Head of caudate nucleus (tissue), 42 donors: ENCODE measurements at regions of chr10 and their contacts with region 1.

Region 1: GRCh38 chr10:13787015-13787421 is 200.3 kb downstream of the PRPF18 start:
- DNase-seq: peak in 41 of 42 donors; percentile 27 to 85 (median 62)

Region 2: DNA sequence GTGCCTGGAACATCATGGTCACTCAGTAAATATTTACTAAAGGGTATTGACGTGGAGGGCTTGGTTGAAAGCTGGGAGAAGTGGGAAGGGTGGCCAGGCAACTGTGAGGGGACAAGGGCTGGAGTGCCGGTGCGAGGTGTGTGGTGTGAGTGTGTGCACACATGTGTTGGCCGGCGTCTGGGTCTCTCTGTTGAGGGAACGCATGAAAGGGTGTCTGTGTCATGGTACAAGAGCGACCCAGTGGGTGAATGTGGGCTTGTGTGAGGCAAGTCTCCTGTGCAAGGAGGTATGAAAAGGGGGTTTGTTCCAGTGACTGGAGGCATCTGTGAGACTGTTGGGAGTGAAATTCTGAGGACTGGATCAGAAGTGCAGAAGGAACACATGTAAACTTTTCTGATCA is 523.4 kb before region 1 on chr10:
- intact Hi-C with region 1: no loop called
- DNase-seq: no peak

Region 3: DNA sequence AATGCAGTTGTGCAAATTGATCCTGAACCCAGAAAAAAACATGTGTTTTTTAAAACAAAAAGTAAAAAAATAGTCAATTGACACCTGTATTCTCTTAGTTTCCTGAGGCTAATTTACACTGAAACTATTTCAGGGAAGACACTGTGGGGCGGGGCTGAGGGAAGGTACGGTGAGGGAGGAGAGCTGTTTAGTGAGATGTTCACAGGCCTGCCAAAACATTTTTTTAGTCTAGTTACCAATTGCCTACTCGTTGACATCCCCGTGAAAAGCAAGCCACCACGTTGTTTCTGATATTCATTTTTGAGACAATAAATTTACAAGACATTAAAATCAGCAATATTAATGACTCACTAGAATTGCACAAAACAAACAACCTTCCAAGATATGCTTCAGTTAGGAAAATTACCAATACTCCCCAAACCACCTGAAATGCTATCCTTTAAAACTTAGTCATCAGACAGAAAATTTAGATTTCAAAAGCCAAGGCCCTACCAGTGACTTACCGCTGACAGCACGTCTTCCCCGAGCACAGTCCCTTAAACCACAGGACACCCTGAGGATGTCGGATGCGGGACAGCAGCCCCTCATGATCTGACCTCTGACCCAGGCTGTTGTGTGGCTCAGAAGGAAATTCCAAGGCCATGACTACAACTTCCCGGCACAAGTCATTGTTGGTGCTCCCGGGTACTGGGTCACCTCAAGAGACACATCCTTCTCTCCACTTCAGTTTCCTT is 78.9 kb after region 1 on chr10:
- intact Hi-C with region 1: no loop called
- DNase-seq: peak in 1 of 42 donors; percentile 32

Region 4: GRCh38 chr10:13891128-13892000 is 104.3 kb after region 1 on chr10:
- intact Hi-C with region 1: loop called (anchors 10 kb)
- DNase-seq: peak in 33 of 42 donors; percentile 23 to 75 (median 56)

Region 5: GRCh38 chr10:13956826-13957225 is 169.8 kb after region 1 on chr10:
- intact Hi-C with region 1: no loop called
- DNase-seq: peak in 40 of 42 donors; percentile 5 to 66 (median 42)

Region 6: DNA sequence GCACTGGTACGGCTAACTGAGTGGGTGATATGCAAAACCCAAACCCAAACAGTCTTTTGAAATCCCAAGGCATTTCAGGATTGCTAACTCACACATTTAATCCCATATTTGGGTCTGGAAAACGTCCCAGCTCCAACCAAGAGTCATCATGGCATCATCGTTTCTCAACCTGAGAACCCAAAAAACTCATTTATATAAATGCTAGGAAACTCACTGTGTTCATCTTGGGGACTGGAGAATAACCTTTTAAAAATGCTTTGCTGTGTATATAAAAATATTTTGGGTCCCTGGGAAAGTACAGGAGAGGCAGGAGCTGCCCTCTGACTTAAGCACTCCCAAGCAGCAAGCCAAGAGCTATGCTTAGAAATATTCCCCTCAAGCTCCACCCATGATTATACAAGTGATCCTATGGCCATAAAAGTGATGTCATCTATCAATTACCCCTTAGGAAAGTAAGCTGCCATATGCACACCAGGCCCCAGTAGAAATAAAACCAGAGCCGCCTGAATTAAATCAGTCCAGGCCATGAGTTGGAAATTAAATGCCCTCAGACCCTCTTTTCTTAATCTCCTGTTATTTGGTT is 191.6 kb after region 1 on chr10:
- intact Hi-C with region 1: no loop called
- DNase-seq: no peak

Region 7: GRCh38 chr10:14093730-14094484 is 306.9 kb after region 1 on chr10:
- intact Hi-C with region 1: loop called (anchors 10 kb)
- DNase-seq: peak in 2 of 42 donors; percentile 35 to 52